ENCODE measurements at regions of chr2 and their contacts with region 1.

Region 1: DNA sequence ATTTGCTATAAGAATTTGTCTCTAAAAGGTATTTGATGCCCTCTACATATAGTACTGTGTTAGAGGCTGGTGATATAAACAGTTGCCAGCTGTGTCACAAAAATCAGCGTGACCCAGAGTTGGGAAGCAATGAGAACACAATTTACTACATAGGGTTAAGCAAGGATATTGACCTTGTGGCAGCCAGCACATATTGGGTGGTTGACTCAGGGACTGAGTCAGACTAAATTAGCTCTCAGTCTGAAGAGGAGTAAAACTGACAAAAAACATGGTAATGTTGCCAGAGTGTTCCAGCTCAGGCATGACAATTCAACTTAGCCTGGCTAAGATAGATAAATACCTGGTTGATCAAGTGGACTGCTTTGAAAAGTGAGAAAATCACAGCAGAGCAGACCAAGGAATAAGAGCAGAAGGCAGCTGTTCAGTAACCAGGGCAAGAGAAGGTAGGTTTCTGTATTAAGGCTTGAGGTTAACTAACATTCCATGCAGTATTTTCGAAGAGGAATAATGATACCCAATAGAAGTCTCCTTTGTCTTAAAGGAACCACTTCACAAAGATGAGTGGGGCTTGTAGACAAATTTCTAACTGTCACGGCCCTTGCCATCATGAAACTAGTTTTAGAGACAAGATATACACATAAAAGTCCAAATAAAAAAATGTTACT is 108.2 kb upstream of the ERBB4 start:
- DNase-seq: peak; percentile 94
- ATAC-seq: peak; percentile 93
- H3K4me3 ChIP-seq: peak overlapping the region; percentile 28; the same call in 1 of the 2 replicates
- H3K27ac ChIP-seq: peak overlapping the region; percentile 87
- H3K4me1 ChIP-seq: peaks cover 40% of the 10 kb centered on the region
- H3K27me3 ChIP-seq: no peaks in the 10 kb centered on the region
- CTCF ChIP-seq: no peak

Region 2: GRCh38 chr2:212619954-212620353 is 26.9 kb before region 1 on chr2:
- CTCF ChIA-PET with region 1: no interaction called
- POLR2A ChIA-PET with region 1: interaction called, 4 read pairs
- intact Hi-C with region 1: loop called (anchors 2 kb)
- DNase-seq: peak; percentile 98
- ATAC-seq: peak; percentile 81
- H3K4me3 ChIP-seq: no peak overlapping the region
- H3K27ac ChIP-seq: peak overlapping the region; percentile 86
- H3K4me1 ChIP-seq: peaks cover 37% of the 10 kb centered on the region
- H3K27me3 ChIP-seq: no peaks in the 10 kb centered on the region
- CTCF ChIP-seq: no peak

Region 3: GRCh38 chr2:212815453-212815852 is 168.6 kb after region 1 on chr2:
- CTCF ChIA-PET with region 1: no interaction called
- POLR2A ChIA-PET with region 1: no interaction called
- intact Hi-C with region 1: no loop called
- DNase-seq: no peak
- ATAC-seq: no peak
- H3K4me3 ChIP-seq: no peak overlapping the region
- H3K27ac ChIP-seq: no peak overlapping the region
- H3K4me1 ChIP-seq: no peaks in the 10 kb centered on the region
- H3K27me3 ChIP-seq: no peaks in the 10 kb centered on the region
- CTCF ChIP-seq: no peak

Measured in PC-3 (cell line).